ENCODE measurements at regions of chr2 and their contacts with region 1.

Region 1: DNA sequence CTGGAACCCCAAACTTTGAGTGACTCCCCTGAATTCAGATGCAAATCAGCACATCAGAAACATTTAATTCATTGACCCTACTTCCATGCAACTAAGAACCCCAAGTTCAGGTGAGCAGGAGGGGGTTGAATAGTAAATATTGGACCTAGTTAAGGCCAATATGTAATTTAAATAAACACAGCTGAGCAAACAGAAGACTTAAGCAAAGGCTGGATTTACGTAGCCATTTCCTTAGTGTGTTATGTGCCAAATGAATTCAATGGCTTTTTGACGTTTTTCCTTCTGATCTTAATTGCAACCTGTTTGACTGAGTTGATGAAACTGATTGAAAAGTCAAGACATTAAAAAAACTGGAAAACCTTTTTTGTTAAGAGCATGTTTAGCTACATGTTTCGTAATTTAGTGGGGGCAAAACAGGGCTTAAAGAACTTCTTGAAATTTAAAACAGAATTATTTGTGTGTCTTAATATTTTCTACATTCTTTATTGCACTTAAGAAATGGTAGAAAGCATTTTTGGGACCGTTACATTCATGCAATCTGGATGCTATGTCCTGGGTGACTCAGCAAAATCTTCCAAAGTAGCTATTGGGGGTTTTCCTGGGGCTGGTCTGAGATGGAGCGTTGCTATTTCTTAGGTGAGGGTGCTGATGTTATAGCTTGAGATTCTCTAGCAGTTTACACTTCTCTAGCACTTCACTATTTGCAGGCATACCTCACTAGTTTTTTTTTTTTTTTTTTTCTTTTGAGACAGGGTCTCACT is 25.5 kb upstream of the KCNE4 start:
- DNase-seq: no peak
- H3K4me3 ChIP-seq: no peak overlapping the region
- H3K27ac ChIP-seq: no peak overlapping the region
- H3K4me1 ChIP-seq: peaks cover 7% of the 10 kb centered on the region; the same call in 1 of the 2 replicates
- H3K27me3 ChIP-seq: no peaks in the 10 kb centered on the region
- CTCF ChIP-seq: no peak

Region 2: DNA sequence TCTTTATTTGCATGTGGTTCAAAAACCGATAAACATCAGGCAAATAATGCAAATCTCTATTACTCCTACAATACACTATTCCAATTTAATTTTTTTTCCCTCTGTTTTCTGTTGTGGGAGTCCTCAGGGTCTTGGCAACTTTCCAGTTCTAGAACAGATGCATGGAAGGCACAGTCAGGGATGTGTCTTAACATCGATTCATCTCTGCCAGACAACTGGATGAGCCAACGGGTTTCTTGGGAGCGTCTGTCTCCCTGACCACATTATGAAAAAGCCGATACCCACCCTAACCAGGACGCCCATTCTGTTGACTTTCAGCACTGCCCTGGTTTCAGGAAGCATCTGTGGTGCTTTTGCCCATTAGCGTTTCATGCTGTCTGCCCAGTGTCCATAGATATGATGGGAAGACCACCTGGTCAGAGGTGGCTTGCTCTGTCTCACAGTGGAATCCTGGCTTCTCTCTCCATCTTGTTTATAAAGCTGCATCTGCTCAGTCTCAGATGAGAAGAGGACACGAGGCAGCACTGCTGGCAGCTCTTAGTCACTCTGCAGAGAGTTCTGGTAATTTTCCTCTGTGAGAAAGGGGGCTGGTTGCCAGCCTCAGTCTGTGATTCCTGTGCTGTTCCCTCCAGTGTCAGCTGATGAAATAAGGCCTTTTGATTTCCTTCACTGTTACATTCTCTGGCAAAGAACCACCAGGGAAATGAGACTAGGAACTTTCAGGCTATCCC is 32.4 kb before region 1 on chr2:
- CTCF ChIA-PET with region 1: no interaction called
- POLR2A ChIA-PET with region 1: interaction called, 21 read pairs
- intact Hi-C with region 1: no loop called
- DNase-seq: no peak
- H3K4me3 ChIP-seq: no peak overlapping the region
- H3K27ac ChIP-seq: peak overlapping the region; percentile 53
- H3K4me1 ChIP-seq: peaks cover 13% of the 10 kb centered on the region
- H3K27me3 ChIP-seq: no peaks in the 10 kb centered on the region
- CTCF ChIP-seq: no peak

Region 3: GRCh38 chr2:223084873-223085272 is 58.3 kb after region 1 on chr2:
- CTCF ChIA-PET with region 1: no interaction called
- POLR2A ChIA-PET with region 1: no interaction called
- intact Hi-C with region 1: no loop called
- DNase-seq: peak in 1 of 2 experiments; percentile 16
- H3K4me3 ChIP-seq: no peak overlapping the region
- H3K27ac ChIP-seq: no peak overlapping the region
- H3K4me1 ChIP-seq: no peaks in the 10 kb centered on the region
- H3K27me3 ChIP-seq: no peaks in the 10 kb centered on the region
- CTCF ChIP-seq: no peak

Region 4: DNA sequence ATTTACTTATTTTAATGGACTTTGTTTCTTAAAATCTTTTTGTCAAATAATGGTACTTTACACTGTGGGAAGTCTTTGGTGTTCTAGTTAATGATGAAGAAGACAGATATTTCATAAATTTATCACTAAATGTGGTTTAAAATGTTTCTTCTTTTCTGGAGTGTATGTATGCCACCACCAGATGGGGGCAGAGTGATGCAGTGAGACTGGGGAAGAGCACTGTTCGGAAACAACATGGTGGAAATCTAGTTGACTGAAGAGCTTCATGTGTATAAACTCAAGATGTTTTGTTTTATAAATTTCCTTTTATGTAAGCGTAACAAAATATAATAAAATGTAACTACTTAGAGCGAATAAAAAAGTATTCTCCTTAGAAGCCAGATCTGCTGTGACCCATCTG is 220.6 kb after region 1 on chr2:
- CTCF ChIA-PET with region 1: no interaction called
- POLR2A ChIA-PET with region 1: no interaction called
- intact Hi-C with region 1: no loop called
- DNase-seq: peak in 1 of 2 experiments; percentile 47
- H3K4me3 ChIP-seq: no peak overlapping the region
- H3K27ac ChIP-seq: no peak overlapping the region
- H3K4me1 ChIP-seq: no peaks in the 10 kb centered on the region
- H3K27me3 ChIP-seq: no peaks in the 10 kb centered on the region
- CTCF ChIP-seq: peak; percentile 93

Region 5: GRCh38 chr2:223399357-223399957 is 372.9 kb after region 1 on chr2:
- CTCF ChIA-PET with region 1: no interaction called
- POLR2A ChIA-PET with region 1: interaction called, 12 read pairs
- intact Hi-C with region 1: no loop called
- DNase-seq: no peak
- H3K4me3 ChIP-seq: no peak overlapping the region
- H3K27ac ChIP-seq: no peak overlapping the region
- H3K4me1 ChIP-seq: no peaks in the 10 kb centered on the region
- H3K27me3 ChIP-seq: no peaks in the 10 kb centered on the region
- CTCF ChIP-seq: no peak

Measured in PC-9 (cell line).